Ascending aorta (tissue), 2 donors: ENCODE measurements at regions of chr2 and their contacts with region 1.

Region 1: DNA sequence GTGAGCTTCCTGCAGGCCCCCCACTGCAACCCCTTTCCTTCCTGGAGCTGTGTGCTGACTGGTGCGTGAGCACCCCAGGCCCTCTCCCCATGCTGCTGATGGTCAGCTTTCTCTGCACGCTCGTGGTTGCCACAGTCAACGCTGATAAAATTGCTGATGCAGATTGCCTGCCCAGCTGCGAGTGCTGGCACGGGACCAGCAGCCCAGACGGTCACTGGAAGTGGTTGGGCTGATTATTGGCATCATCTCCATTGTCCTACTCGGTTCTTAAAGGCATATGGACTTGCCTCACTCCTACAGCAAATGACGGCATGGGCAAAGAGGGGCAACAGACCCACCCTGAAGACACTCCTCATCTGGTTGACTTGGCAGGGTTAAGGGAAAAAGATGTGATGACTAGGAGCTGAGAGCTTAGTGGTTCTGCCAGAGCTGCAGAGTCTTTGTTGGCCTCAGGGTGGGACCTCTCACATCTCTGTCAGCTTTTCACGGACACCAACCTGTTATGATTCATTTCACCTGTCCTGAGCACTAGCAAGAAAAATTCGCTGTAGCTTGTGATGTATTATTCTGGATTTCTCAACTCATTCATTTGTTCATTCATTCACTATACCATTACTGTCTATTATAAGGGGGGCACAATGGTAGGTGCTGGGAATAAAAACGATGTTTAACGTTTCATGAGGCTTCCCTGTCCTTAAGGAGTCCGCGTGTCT is 38.4 kb downstream of the PAX8 start:
- DNase-seq: peak; percentile 79 to 93
- H3K4me3 ChIP-seq: peak overlapping the region in 1 of 2 donors; percentile 9
- H3K27ac ChIP-seq: peak overlapping the region; percentile 72
- H3K4me1 ChIP-seq: peaks cover 3 to 18% of the 10 kb centered on the region in 2 donors
- H3K27me3 ChIP-seq: no peaks in the 10 kb centered on the region
- CTCF ChIP-seq: no peak

Region 2: GRCh38 chr2:113157118-113157896 is 83.0 kb before region 1 on chr2:
- intact Hi-C with region 1: no loop called
- DNase-seq: no peak
- H3K4me3 ChIP-seq: peak overlapping the region; percentile 44 to 49
- H3K27ac ChIP-seq: no peak overlapping the region
- H3K4me1 ChIP-seq: no peaks in the 10 kb centered on the region
- H3K27me3 ChIP-seq: no peaks in the 10 kb centered on the region
- CTCF ChIP-seq: no peak

Region 3: GRCh38 chr2:113198790-113199612 is 41.3 kb before region 1 on chr2:
- intact Hi-C with region 1: loop called (anchors 1 kb)
- DNase-seq: peak in 1 of 2 donors; percentile 81
- H3K4me3 ChIP-seq: peak overlapping the region; percentile 75 to 87
- H3K27ac ChIP-seq: peak overlapping the region in 1 of 2 donors; percentile 61
- H3K4me1 ChIP-seq: no peaks in the 10 kb centered on the region
- H3K27me3 ChIP-seq: no peaks in the 10 kb centered on the region
- CTCF ChIP-seq: peak; percentile 70 to 91 (median 91)

Region 4: DNA sequence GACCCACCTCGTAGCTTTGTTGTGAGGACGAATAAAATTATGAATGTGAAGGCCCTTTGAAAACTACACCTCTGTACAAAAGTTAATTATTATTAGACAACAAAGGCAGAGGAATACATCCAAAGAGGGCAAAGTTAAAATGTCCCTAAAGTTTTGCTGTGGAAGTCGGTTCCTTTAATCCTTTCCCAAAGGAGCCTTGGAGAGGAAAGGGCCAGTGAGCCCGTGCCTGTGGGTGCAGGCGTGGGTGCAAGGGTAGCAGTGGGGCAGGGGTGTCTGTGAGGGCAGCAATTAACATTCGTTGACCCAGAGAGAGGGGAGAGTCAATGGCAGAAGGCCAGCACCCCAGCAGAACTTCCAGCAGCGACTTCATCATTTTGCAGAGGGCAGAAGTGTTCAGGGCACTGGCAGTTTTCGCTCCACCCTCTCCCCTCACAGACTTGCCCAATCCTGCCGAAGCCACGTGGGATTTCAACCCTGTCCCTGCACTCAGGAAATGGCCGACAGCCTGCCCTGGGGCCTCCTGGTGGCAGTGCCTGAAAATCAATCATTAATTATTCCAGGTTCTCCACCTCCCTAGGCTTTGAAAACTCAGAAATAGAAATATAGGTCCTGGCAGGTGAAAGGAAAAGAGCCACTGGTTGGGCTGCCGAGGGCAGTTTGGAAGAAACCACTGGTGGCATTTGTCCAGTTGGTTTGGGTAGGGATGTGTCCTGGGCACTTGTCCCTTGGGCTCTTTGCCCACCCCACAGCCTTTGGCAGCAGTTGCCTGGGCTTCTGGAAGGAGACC is 42.6 kb after region 1 on chr2:
- intact Hi-C with region 1: loop called (anchors 2 kb)
- DNase-seq: peak; percentile 40 to 73
- H3K4me3 ChIP-seq: no peak overlapping the region
- H3K27ac ChIP-seq: peak overlapping the region; percentile 84 to 93
- H3K4me1 ChIP-seq: peaks cover 9 to 22% of the 10 kb centered on the region in 2 donors
- H3K27me3 ChIP-seq: peaks cover 4% of the 10 kb centered on the region
- CTCF ChIP-seq: peak; percentile 15 to 49 (median 44)